ENCODE measurements at regions of chr11 and their contacts with region 1.

Region 1: GRCh38 chr11:36509694-36510566 is at the start of gene TRAF6:
- DNase-seq: peak; percentile 71
- ATAC-seq: peak; percentile 97
- H3K4me3 ChIP-seq: peak within 1 kb of the TSS; percentile 97 to 100 (median 97)
- H3K27ac ChIP-seq: peak within 1 kb of the TSS; percentile 79
- H3K4me1 ChIP-seq: peaks cover 32% of the 10 kb centered on the region
- H3K27me3 ChIP-seq: no peaks in the 10 kb centered on the region; a peak in 1 of 5 replicates
- CTCF ChIP-seq: peak; percentile 92
- EP300 ChIP-seq: peak in 1 of 2 experiments; percentile 13; a peak in 1 of 4 replicates
- POLR2A ChIP-seq: peak; percentile 94 to 95
- RAD21 ChIP-seq: peak; percentile 50; the same call in 1 of the 2 replicates
- total RNA-seq, gene TRAF6: 5.9 and 6.5 TPM in 2 replicates

Region 2: GRCh38 chr11:36541001-36541400 is 31.1 kb after region 1 on chr11:
- CTCF ChIA-PET with region 1: no interaction called
- POLR2A ChIA-PET with region 1: no interaction called
- in situ Hi-C with region 1: no loop called
- intact Hi-C with region 1: loop called (anchors 1 kb)
- DNase-seq: peak; percentile 32
- ATAC-seq: peak; percentile 86
- H3K4me3 ChIP-seq: no peak overlapping the region
- H3K27ac ChIP-seq: no peak overlapping the region
- H3K4me1 ChIP-seq: no peaks in the 10 kb centered on the region
- H3K27me3 ChIP-seq: peaks cover 0 to 8% of the 10 kb centered on the region in 2 experiments; a peak in 1 of 5 replicates
- CTCF ChIP-seq: peak; percentile 65
- EP300 ChIP-seq: no peak
- POLR2A ChIP-seq: no peak
- RAD21 ChIP-seq: no peak

Region 3: DNA sequence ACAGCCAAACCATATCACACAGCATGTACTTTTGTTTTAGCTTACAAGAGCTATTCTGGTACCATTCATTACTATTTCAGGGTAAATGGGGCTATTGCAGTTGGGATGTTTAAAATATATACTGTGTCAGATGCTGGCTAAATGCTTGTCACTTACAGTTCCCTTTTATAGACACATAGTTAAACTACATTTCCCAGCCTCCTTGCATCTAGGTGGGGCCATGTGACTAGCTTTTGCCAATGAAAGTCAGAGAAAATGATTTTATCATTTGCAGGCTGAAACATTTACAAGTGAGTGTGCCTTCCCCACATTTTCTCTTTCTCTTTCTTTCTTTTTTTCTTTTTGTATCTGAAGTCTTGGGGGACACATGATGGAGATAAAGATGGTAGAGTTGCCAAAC is 76.6 kb after region 1 on chr11:
- CTCF ChIA-PET with region 1: no interaction called
- POLR2A ChIA-PET with region 1: no interaction called
- in situ Hi-C with region 1: no loop called
- intact Hi-C with region 1: loop called (anchors 10 kb)
- DNase-seq: no peak
- ATAC-seq: no peak
- H3K4me3 ChIP-seq: no peak overlapping the region
- H3K27ac ChIP-seq: no peak overlapping the region
- H3K4me1 ChIP-seq: no peaks in the 10 kb centered on the region
- H3K27me3 ChIP-seq: no peaks in the 10 kb centered on the region
- CTCF ChIP-seq: no peak
- EP300 ChIP-seq: no peak
- POLR2A ChIP-seq: no peak
- RAD21 ChIP-seq: no peak

Region 4: DNA sequence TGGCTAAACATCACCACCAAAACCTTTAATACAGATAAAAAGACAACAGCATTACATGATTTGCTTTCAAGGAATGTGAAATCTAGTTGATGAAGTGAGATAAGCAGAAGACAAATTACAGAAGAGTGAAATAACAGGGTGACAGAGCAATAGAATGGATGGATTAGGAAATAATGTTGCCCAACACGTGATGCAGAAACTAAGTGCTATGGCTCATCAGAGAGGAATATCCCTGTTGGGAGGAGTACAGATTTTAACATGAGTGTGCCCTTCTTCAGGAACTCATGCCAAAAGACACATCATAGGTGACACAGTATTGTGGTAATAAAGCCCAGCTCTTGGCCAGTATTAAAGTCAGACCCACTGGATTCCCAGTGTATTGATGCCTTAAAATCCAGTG is 264.7 kb after region 1 on chr11:
- CTCF ChIA-PET with region 1: no interaction called
- POLR2A ChIA-PET with region 1: no interaction called
- in situ Hi-C with region 1: no loop called
- intact Hi-C with region 1: no loop called
- DNase-seq: no peak
- ATAC-seq: no peak
- H3K4me3 ChIP-seq: no peak overlapping the region
- H3K27ac ChIP-seq: no peak overlapping the region
- H3K4me1 ChIP-seq: no peaks in the 10 kb centered on the region
- H3K27me3 ChIP-seq: no peaks in the 10 kb centered on the region
- CTCF ChIP-seq: no peak
- EP300 ChIP-seq: no peak
- POLR2A ChIP-seq: no peak
- RAD21 ChIP-seq: no peak

Measured in HepG2 (cell line).